ENCODE measurements at regions of chr1 and their contacts with region 1.

Region 1: GRCh38 chr1:155176544-155177071 is 3.0 kb downstream of the TRIM46 start:
- DNase-seq: peak; percentile 91
- ATAC-seq: peak; percentile 57

Region 2: DNA sequence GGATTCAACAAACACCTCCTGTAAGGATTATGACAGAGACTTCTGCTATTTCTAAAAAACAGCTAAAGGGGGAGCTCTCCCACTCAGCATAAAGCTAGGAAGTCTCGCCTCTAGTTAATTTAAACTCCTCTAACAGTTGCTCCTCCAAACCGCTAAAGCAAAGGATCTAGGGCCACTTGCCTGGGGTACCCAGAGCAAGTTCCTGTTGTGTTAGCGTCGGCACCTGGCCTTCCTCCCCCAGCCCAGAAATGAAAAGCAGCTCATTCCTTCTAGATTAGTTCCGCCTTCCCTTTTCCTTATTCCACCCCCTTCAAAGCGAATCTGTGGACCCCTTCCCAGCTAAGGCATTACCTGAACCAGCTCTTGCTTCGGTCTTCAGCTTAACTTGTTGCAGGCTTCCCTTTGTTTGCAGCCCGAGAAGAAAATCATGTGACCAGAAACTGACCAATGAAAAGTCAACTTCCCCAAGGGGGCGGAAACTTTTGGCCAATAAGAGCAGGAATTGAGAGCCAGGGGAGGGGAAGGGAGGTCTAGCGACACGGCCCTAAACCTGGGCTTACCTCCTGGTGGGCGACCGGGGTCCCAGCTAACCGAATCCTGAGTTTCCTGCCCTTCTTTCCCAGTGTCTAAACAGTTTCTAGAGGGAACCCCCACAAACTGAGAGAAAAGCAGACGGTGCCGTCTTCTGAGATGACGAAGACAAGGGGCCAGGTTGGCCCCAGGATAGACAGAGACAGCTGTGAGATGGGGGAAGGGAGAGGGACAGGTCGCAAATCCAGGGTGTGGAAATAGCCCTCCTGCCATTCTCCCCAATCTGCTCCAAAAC is 220.7 kb before region 1 on chr1 and contains the start of gene PBXIP1:
- intact Hi-C with region 1: no loop called
- DNase-seq: peak; percentile 68
- ATAC-seq: peak; percentile 84
- total RNA-seq, gene PBXIP1: 55.9 TPM

Region 3: GRCh38 chr1:155227261-155228095 is 50.9 kb after region 1 on chr1:
- intact Hi-C with region 1: loop called (anchors 2 kb)
- DNase-seq: peak; percentile 99
- ATAC-seq: peak; percentile 99

Measured in Right ventricle myocardium inferior (tissue), 1 donor.